ENCODE measurements at regions of chr10 and their contacts with region 1.

Region 1: DNA sequence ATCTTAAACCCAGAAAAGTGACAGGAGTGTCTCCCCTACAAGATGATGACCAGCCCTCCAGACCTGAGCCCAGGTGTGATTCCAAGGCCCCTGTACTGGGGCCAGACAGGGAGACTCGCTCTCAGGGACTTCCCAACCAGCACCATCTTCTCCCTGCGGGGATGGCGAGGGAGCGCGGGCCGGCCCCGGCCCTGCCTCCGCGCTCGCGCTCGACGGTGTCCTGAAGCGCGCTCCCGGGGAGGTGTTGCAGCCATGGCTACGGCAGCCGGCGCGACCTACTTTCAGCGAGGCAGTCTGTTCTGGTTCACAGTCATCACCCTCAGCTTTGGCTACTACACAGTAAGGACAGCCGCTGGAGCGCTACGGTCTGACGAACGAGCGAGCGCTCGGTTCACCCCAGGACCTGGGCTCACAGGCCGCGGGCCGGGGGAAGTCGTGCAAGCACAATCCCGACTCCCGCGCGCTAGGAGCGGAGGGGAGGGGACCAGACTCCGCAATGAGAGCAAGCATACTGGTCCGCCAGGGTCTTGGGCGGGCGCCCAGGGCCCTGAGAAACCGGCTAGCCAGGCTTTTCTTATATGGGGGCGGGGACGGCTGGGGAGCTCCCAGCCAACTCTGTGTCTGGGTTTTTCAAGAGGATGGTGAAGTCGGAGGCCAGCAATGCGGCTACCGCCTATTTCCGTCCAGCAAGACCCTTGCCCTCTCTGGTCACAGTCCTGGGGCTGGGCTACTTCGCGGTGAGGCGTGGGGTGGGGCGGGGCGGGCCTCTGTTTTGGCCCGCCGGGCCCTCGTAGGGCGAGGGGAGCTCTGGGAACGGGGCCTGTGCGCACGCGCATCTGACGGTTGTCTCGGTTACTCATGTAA is at the start of gene TMEM254:
- DNase-seq: peak; percentile 94
- H3K4me3 Mint-ChIP-seq: peak within 1 kb of the TSS; percentile 98
- H3K27ac Mint-ChIP-seq: peak within 1 kb of the TSS; percentile 85
- H3K4me1 Mint-ChIP-seq: peaks cover 30% of the 10 kb centered on the region
- H3K27me3 Mint-ChIP-seq: no peaks in the 10 kb centered on the region
- total RNA-seq, gene TMEM254: 16.2 to 16.7 TPM

Region 2: GRCh38 chr10:79242620-79243152 is 836.0 kb before region 1 on chr10:
- CTCF ChIA-PET with region 1: no interaction called
- intact Hi-C with region 1: loop called (anchors 10 kb)
- DNase-seq: peak; percentile 69
- H3K4me3 Mint-ChIP-seq: peak overlapping the region; percentile 78
- H3K27ac Mint-ChIP-seq: peak overlapping the region; percentile 56
- H3K4me1 Mint-ChIP-seq: peaks cover 45% of the 10 kb centered on the region
- H3K27me3 Mint-ChIP-seq: no peaks in the 10 kb centered on the region

Region 3: GRCh38 chr10:79322616-79323543 is 755.8 kb before region 1 on chr10:
- CTCF ChIA-PET with region 1: no interaction called
- intact Hi-C with region 1: loop called (anchors 2 kb)
- DNase-seq: peak; percentile 95
- H3K4me3 Mint-ChIP-seq: peak overlapping the region; percentile 33
- H3K27ac Mint-ChIP-seq: peak overlapping the region; percentile 92
- H3K4me1 Mint-ChIP-seq: peaks cover 68% of the 10 kb centered on the region
- H3K27me3 Mint-ChIP-seq: no peaks in the 10 kb centered on the region

Region 4: GRCh38 chr10:79445141-79445976 is 633.3 kb before region 1 on chr10 and contains the start of gene ZCCHC24:
- CTCF ChIA-PET with region 1: no interaction called
- intact Hi-C with region 1: loop called (anchors 2 kb)
- DNase-seq: peak; percentile 92
- H3K4me3 Mint-ChIP-seq: peak within 1 kb of the TSS; percentile 70
- H3K27ac Mint-ChIP-seq: no peak within 1 kb of the TSS
- H3K4me1 Mint-ChIP-seq: peaks cover 21% of the 10 kb centered on the region
- H3K27me3 Mint-ChIP-seq: peaks cover 12% of the 10 kb centered on the region
- total RNA-seq, gene ZCCHC24: 0.52 to 0.69 TPM

Region 5: DNA sequence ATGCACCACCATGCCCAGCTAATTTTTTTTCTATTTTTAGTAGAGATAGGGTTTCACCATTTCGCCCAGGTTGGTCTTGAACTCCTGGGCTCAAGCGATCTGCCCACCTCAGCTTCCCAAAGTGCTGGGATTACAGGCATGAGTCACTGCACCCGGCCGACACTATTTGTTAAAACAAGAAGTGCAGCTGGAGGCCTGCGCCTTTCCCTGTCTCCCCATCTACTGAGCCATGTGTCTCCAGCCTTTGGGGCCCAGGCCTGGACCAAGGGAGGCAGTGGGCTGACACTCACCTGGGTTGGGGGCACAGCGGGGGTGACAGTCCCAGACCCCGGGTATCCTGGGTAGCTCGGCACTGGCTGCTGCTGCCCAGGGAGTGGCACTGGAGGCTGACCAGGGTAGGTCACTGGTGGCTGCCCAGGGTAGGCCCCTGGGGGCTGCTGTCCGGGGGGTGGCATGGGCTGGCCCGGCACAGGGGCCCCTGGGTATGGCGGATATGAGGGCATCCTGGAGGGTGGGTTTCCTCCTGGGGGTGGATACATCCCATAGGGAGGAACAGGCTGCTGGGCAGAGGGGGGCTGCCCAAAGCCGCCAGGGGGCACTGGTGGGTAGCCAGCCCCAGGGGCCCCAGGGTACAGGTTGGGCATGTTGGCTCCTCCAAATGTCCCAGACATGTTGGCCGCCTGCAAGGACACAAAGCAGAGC is 90.2 kb after region 1 on chr10:
- CTCF ChIA-PET with region 1: no interaction called
- intact Hi-C with region 1: no loop called
- DNase-seq: no peak
- H3K4me3 Mint-ChIP-seq: no peak overlapping the region
- H3K27ac Mint-ChIP-seq: no peak overlapping the region
- H3K4me1 Mint-ChIP-seq: peaks cover 16% of the 10 kb centered on the region
- H3K27me3 Mint-ChIP-seq: no peaks in the 10 kb centered on the region

Region 6: DNA sequence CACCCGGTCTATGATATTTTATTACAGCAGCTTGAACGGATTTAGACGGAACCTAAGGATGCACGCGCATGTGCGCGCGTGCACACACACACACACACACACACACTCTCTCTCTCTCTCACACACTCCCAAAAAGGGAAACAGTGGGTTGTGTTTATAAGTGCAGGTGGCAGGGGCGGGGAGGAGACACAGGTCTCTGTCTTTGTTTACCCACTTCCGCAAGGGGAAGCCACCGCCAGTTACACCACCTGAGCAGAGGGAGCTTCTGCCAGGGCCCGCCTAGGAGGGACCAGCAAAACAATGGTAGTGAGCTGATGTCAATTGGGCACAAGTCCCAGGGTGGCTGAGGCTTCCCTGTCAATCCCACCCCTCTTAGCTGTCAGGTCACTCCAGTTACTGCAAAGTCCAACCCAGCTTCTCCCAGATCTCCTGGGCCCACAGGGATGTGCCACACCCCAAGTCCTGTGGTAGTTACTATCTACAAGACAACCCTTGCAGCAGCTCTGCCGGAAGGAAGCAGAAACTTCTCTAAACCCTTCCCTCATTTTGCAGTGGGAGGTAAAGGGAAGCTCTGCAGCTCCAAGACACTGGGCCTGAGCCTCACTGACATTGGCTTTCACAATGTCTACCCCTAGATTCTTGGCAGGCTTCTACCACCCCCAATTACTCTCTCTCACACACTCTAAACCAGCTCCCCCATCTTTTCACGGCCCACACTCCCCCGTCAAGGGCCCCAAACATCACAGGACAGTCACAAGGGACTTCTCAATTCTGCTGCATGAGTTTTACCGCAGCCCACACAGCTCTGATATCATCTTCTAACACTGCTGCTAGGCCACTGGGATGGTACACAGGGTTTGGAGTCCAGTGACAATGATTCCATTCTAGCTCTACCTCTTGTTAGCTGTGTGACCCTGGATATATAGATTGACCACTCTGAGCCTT is 109.1 kb after region 1 on chr10:
- CTCF ChIA-PET with region 1: interaction called, 3 read pairs
- intact Hi-C with region 1: loop called (anchors 1 kb)
- DNase-seq: peak; percentile 83
- H3K4me3 Mint-ChIP-seq: peak overlapping the region; percentile 53
- H3K27ac Mint-ChIP-seq: peak overlapping the region; percentile 89
- H3K4me1 Mint-ChIP-seq: peaks cover 81% of the 10 kb centered on the region
- H3K27me3 Mint-ChIP-seq: no peaks in the 10 kb centered on the region

Region 7: GRCh38 chr10:80459047-80459931 is 380.6 kb after region 1 on chr10:
- CTCF ChIA-PET with region 1: interaction called, 6 read pairs
- intact Hi-C with region 1: loop called (anchors 5 kb)
- DNase-seq: peak; percentile 83
- H3K4me3 Mint-ChIP-seq: peak overlapping the region; percentile 76
- H3K27ac Mint-ChIP-seq: peak overlapping the region; percentile 93
- H3K4me1 Mint-ChIP-seq: peaks cover 82% of the 10 kb centered on the region
- H3K27me3 Mint-ChIP-seq: no peaks in the 10 kb centered on the region

Region 8: DNA sequence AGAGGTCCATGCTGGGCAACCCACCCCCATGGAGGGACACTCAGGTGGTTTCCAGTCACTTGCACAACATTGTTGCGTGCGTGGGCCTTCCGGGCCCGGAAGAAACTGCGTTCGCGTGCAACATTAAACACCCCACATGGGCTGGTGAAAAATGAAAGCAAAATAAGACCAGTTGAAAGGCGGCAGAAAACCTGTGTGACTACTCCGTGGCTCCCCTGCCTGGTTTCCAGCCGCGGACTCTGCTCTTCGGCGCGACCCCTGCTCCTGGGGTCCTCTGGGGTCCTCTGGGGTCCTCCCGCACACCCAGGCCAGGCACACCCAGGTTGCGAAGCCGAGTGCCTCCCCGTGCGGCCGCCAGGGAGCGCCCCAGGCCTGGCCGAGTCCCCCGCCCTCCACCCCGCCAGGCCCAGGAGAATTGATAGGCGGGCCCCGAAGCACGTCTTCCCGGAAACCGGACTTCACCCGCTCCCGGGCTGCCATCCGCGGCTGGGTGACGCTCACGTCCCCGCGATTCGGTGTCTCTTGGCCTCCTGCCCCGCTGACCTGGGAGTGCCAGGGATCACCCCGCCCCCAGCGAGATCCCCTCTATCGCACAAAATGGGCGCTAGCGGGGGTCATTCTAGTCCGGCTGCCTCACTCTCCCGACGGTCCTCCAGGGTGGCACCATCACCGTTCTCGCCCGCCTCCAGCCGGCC is 457.1 kb after region 1 on chr10:
- CTCF ChIA-PET with region 1: no interaction called
- intact Hi-C with region 1: loop called (anchors 5 kb)
- DNase-seq: peak; percentile 83
- H3K4me3 Mint-ChIP-seq: peak overlapping the region; percentile 89
- H3K27ac Mint-ChIP-seq: peak overlapping the region; percentile 98
- H3K4me1 Mint-ChIP-seq: peaks cover 28% of the 10 kb centered on the region
- H3K27me3 Mint-ChIP-seq: no peaks in the 10 kb centered on the region

Measured in activated naive CD4-positive, alpha-beta T cell treated with anti-CD3 and anti-CD28 coated beads for 36 hours (primary cell).